Ascending aorta (tissue), 2 donors: ENCODE measurements at regions of chr5 and their contacts with region 1.

Region 1: GRCh38 chr5:88785391-88786219 is 97.4 kb downstream of the MEF2C start:
- DNase-seq: peak in 1 of 2 donors; percentile 83
- H3K4me3 ChIP-seq: peak overlapping the region; percentile 29 to 50
- H3K27ac ChIP-seq: peak overlapping the region; percentile 84 to 90
- H3K4me1 ChIP-seq: peaks cover 10 to 27% of the 10 kb centered on the region in 2 donors
- H3K27me3 ChIP-seq: no peaks in the 10 kb centered on the region
- CTCF ChIP-seq: no peak

Region 2: DNA sequence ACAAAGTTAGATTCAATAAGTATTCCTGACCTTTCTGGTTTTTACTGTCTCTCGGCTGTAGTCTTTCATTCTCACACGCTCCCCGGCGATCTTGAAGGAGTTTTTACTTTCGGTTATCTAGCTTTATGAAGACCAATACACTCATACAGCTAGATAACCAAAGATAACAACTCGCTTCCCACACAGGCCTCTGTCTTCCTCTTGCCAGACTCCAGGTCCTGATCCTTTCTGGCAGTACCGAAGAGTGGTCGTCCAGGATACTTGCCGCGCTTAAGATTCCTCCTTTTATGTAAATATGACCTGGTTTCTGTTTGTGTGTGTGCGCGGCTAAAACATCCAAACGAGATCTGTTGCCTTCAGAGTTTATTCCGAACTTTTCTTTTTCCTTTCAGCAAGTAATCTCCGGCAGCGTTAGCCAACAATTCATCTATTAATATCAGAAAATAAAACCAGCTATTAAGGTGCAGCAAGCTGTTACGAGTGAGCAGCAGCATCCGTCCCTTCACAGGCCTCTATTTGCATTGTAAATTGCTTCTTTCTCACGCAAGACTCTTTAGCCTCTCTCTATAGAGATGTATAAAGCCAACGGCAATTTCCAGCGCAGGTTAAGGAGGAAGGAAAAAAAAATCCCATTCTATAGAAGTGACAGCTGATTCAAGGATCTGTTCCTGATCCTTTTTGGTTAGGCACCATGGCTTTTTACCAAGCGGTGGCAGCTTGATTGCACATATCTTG is 118.7 kb before region 1 on chr5:
- intact Hi-C with region 1: no loop called
- DNase-seq: no peak
- H3K4me3 ChIP-seq: peak overlapping the region; percentile 4 to 32
- H3K27ac ChIP-seq: no peak overlapping the region
- H3K4me1 ChIP-seq: no peaks in the 10 kb centered on the region
- H3K27me3 ChIP-seq: peaks cover 32% of the 10 kb centered on the region
- CTCF ChIP-seq: no peak

Region 3: DNA sequence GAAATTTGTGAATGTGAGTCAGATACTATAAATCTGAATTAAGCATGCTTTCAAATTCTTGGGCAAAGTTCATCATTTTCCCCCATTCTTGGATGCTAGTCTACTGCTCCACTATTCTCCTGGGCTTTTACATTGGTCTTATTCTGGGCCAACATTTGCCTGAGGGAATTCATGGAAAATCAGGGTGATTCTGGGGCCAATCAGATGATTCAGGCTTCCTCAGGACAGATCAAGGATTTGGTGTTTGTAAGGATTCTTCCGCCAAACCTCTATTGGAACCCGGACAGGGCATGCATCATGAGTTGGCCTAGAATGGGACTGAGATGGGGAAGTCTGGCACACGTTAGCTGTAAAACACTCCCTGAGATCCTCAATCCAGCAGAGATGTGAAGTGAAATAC is 16.4 kb before region 1 on chr5:
- intact Hi-C with region 1: loop called (anchors 1 kb)
- DNase-seq: peak in 1 of 2 donors; percentile 89
- H3K4me3 ChIP-seq: no peak overlapping the region
- H3K27ac ChIP-seq: peak overlapping the region in 1 of 2 donors; percentile 68
- H3K4me1 ChIP-seq: peaks cover 0 to 13% of the 10 kb centered on the region in 2 donors
- H3K27me3 ChIP-seq: no peaks in the 10 kb centered on the region
- CTCF ChIP-seq: no peak

Region 4: GRCh38 chr5:88826646-88827585 is 41.3 kb after region 1 on chr5:
- intact Hi-C with region 1: loop called (anchors 2 kb)
- DNase-seq: peak; percentile 17 to 80
- H3K4me3 ChIP-seq: peak overlapping the region; percentile 21 to 58
- H3K27ac ChIP-seq: peak overlapping the region; percentile 88 to 91
- H3K4me1 ChIP-seq: peaks cover 0 to 28% of the 10 kb centered on the region in 2 donors
- H3K27me3 ChIP-seq: no peaks in the 10 kb centered on the region
- CTCF ChIP-seq: no peak